Left lung (tissue), 14 donors: ENCODE measurements at regions of chr19 and their contacts with region 1.

Region 1: DNA sequence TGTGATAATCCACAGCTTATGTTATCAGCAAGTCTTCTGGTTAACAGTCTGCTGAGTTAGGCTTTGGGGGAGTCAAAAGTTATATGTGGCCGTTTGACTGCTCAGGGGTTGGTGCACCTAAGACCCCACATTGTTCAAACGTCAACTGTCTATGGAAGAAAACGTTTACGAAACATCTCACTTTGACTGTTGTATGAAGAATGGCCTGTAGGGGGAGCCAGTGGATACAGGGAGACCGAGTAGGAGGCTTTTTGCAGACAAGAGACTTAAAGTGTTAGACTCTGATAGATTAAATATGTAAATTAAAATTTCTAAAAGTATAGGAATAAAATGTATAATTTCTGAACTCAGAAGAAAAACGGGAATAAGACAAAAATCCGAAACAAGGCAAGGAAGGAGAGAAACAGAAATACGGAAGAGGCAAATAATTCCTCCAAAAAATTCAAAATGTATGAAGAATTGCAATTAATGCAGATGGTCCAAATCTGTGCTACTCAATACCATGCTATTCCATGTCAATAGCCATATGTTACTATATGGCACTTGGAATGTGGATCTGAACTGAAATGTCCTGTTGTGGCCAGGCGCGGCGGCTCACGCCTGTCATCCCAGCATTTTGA is 37.8 kb downstream of the TNFSF14 start:
- DNase-seq: peak in 3 of 4 donors; percentile 53 to 83 (median 66)
- ATAC-seq: peak; percentile 97
- H3K4me3 ChIP-seq: no peak overlapping the region
- H3K27ac ChIP-seq: no peak overlapping the region
- H3K4me1 ChIP-seq: no peaks in the 10 kb centered on the region
- H3K27me3 ChIP-seq: peaks cover 0 to 1% of the 10 kb centered on the region in 2 donors
- CTCF ChIP-seq: peak; percentile 81 to 87

Region 2: GRCh38 chr19:6516659-6517291 is 115.3 kb before region 1 on chr19:
- intact Hi-C with region 1: loop called in 1 of 2 experiments (anchors 10 kb)
- DNase-seq: peak; percentile 84 to 100 (median 92)
- ATAC-seq: peak; percentile 89
- H3K4me3 ChIP-seq: peak overlapping the region; percentile 65 to 74
- H3K27ac ChIP-seq: peak overlapping the region; percentile 80
- H3K4me1 ChIP-seq: peaks cover 0 to 22% of the 10 kb centered on the region in 2 donors
- H3K27me3 ChIP-seq: no peaks in the 10 kb centered on the region
- CTCF ChIP-seq: peak; percentile 96 to 98

Region 3: DNA sequence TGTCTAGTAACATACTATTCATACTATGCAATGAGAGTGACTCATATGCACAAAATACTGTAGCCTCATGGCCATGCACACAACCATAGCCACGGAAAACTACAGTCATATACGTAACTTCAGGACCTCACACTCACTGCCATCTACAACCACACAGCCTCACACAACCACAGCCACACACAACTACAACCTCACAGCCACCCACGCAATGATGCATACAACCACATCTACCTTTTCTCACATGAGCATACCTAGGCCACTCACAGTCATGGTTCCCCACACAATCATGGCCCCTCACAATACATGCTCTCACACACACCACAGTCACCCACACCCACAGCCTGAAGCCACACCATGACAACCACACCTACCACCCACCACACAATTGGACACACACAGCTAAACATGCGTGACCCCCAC is 46.6 kb after region 1 on chr19:
- intact Hi-C with region 1: no loop called
- DNase-seq: no peak
- ATAC-seq: no peak
- H3K4me3 ChIP-seq: no peak overlapping the region
- H3K27ac ChIP-seq: no peak overlapping the region
- H3K4me1 ChIP-seq: peaks cover 0 to 21% of the 10 kb centered on the region in 2 donors
- H3K27me3 ChIP-seq: peaks cover 0 to 12% of the 10 kb centered on the region in 2 donors
- CTCF ChIP-seq: no peak